ENCODE measurements at regions of chr2 and their contacts with region 1.

Region 1: DNA sequence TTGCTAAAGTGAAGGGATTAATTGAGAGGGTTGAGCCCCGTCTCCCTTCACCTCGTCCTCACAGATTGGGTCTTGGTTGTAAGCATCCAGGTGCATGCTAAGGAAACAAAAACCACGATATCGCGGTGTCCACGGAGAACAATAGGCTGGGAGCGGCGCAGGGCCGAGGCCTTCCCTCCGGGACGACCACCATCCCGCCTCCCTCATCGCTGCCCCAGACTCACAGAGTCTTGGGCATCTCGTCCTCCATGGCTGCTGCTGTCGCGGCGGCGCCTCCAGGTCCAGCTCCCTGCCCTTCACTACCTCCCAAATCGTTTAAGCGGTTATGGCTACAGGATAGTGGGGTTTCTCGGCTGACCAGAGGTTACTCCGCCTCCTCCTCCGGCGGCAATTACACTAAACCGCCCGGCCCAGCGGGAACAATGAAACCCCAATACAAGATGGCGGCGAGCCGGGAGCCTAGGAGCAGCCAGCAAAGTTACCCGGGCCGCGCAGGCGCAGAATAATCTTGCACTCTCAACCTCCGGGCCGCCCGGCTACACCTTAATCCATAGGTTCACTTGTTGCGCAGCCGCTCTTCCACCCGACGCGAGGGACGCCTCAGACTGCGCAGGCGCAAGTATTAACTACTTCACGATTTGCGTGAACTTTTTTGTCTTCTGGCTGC is at the start of gene TIA1:
- DNase-seq: peak; percentile 93 to 99
- H3K4me3 ChIP-seq: peak within 1 kb of the TSS; percentile 69 to 70
- H3K27ac ChIP-seq: peak within 1 kb of the TSS; percentile 87 to 88
- H3K4me1 ChIP-seq: peaks cover 0 to 9% of the 10 kb centered on the region in 2 donors
- H3K27me3 ChIP-seq: no peaks in the 10 kb centered on the region
- CTCF ChIP-seq: no peak
- total RNA-seq, gene TIA1: 19.3 TPM

Region 2: GRCh38 chr2:70190418-70191243 is 57.7 kb before region 1 on chr2 and contains the start of gene C2orf42:
- intact Hi-C with region 1: loop called (anchors 2 kb)
- DNase-seq: peak; percentile 85 to 98
- H3K4me3 ChIP-seq: peak within 1 kb of the TSS; percentile 67 to 82
- H3K27ac ChIP-seq: peak within 1 kb of the TSS; percentile 96 to 97
- H3K4me1 ChIP-seq: peaks cover 0 to 4% of the 10 kb centered on the region in 2 donors
- H3K27me3 ChIP-seq: no peaks in the 10 kb centered on the region
- CTCF ChIP-seq: no peak
- total RNA-seq, gene C2orf42: 9.5 TPM

Region 3: GRCh38 chr2:70258532-70258874 is 10.2 kb after region 1 on chr2:
- intact Hi-C with region 1: loop called (anchors 1 kb)
- DNase-seq: peak in 1 of 2 donors; percentile 78
- H3K4me3 ChIP-seq: peak overlapping the region; percentile 93 to 97
- H3K27ac ChIP-seq: peak overlapping the region; percentile 88 to 91
- H3K4me1 ChIP-seq: peaks cover 4 to 17% of the 10 kb centered on the region in 2 donors
- H3K27me3 ChIP-seq: no peaks in the 10 kb centered on the region
- CTCF ChIP-seq: no peak

Region 4: DNA sequence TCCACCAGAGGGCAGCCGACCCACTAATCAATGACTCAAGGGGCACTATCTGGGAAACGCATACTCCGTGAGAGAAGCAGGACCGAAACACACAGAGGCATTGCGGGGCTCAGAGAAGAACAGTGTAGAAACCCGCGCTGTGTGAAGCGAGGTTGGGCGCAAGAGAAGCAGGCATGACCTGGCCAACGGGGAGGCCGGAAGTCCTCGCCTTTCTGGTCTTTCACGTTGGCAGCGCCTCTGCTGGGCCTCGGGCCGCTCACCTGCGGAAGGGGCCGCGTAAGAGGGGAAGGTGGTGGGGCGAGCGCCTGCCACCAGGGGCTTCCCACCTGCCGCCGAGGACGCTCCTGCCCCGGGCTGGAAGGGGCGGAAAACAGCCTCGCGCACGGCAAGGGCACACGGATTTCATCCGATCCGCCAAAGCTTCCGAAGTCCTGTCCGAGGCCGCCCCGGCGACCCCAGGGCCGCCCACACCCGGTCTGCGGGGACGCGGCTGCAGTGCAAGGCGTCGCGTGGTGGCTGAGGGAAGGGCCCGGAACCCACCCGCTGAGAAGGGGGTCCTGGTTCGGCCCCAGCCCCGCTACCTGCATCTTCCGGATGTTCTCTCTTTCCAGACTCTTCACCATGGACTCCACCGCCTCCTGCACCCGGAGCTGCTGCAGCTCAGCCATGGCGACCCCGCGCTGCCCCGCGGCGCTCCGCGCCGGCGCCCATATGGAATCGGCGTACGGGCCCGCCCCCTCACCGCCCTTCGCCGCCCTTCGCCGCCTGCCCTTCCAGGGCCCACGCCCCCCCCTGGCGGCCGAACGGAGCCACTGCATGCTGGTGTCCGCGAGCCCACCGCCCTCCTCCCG is 53.3 kb after region 1 on chr2 and contains the start of gene FAM136A:
- intact Hi-C with region 1: loop called (anchors 5 kb)
- DNase-seq: peak; percentile 16 to 90
- H3K4me3 ChIP-seq: peak within 1 kb of the TSS; percentile 66 to 84
- H3K27ac ChIP-seq: peak within 1 kb of the TSS; percentile 80
- H3K4me1 ChIP-seq: peaks cover 0 to 5% of the 10 kb centered on the region in 2 donors
- H3K27me3 ChIP-seq: no peaks in the 10 kb centered on the region
- CTCF ChIP-seq: peak; percentile 94 to 99 (median 97)
- total RNA-seq, gene FAM136A: 2.0 TPM

Measured in ascending aorta (tissue), 2 donors.